ENCODE measurements at regions of chr1 and their contacts with region 1.

Region 1: GRCh38 chr1:15668089-15668754 is 15.9 kb upstream of the PLEKHM2 start:
- DNase-seq: no peak
- ATAC-seq: no peak

Region 2: DNA sequence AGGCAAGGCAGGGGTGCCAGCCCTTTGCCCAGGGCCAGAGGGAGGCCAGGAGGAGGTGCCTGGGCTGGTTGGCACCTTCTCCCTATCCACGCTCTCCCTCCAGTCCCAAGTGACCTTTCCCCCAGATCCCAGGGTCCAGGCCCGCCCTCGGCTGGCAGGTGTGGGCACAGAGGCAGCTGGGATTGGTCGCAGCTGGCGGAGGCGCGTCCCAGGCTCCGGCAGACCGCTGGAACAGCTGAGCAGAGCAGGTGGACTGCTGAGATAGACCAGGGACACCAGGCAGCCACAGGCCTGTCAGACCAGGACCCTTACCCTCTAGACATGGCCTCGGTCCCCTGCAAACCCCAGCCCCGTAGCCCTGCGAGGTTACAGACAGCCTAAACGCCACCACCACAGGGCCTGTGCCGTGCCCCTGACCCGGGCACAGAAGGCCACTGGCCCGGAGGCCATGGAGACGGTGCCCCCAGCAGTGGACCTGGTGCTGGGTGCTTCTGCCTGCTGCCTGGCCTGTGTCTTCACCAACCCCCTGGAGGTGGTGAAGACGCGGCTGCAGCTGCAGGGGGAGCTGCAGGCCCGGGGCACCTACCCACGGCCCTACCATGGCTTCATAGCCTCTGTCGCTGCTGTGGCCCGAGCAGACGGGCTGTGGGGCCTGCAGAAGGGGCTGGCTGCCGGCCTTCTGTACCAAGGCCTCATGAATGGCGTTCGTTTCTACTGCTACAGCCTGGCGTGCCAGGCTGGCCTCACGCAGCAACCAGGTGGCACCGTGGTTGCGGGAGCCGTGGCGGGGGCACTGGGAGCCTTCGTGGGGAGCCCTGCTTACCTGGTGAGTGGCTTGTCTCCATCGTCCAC is 68.0 kb after region 1 on chr1 and contains the start of gene SLC25A34:
- intact Hi-C with region 1: loop called (anchors 10 kb)
- DNase-seq: peak; percentile 88
- ATAC-seq: peak; percentile 79
- total RNA-seq, gene SLC25A34: 54.3 TPM

Region 3: DNA sequence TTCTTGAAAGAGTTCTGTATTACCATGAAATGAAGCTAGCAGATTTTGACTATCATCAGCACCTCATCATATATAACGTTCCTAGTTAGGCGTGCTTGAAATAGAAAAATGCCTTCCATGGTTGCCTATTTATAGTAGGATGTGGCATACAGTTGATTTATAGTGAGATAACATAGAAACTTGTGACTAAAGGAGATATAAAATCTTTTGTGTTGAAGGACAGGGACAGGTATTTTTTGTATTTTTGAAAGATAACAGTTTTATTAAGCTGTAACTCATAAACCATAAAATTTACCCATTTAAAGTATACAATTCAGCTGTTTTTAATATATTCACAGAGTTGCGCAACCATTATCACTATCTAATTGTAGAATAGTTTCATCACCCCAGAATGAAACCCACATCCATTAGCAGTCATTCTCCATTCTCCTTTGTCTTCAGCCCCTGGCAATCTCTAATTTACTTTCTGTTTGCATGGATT is 198.5 kb after region 1 on chr1:
- intact Hi-C with region 1: no loop called
- DNase-seq: no peak
- ATAC-seq: no peak

Measured in Right ventricle myocardium superior (tissue), 1 donor.